CD8-positive, alpha-beta T cell (primary cell): ENCODE measurements at regions of chr19 and their contacts with region 1.

Region 1: GRCh38 chr19:46753420-46754155 is 7.3 kb upstream of the STRN4 start:
- DNase-seq: peak; percentile 51 to 82 (median 72)
- ATAC-seq: peak; percentile 95
- H3K4me3 ChIP-seq: no peak overlapping the region
- H3K4me3 Mint-ChIP-seq: no peak overlapping the region
- H3K27ac ChIP-seq: no peak overlapping the region
- H3K27ac Mint-ChIP-seq: no peak overlapping the region
- H3K4me1 ChIP-seq: no peaks in the 10 kb centered on the region
- H3K4me1 Mint-ChIP-seq: peaks cover 7% of the 10 kb centered on the region
- H3K27me3 ChIP-seq: no peaks in the 10 kb centered on the region
- H3K27me3 Mint-ChIP-seq: no peaks in the 10 kb centered on the region
- CTCF ChIP-seq: peak; percentile 55

Region 2: GRCh38 chr19:46529622-46530462 is 223.7 kb before region 1 on chr19:
- CTCF ChIA-PET with region 1: interaction called, 9 read pairs
- POLR2A ChIA-PET with region 1: no interaction called
- intact Hi-C with region 1: loop called (anchors 1 to 2 kb)
- DNase-seq: peak; percentile 57 to 88 (median 74)
- ATAC-seq: peak; percentile 75
- H3K4me3 ChIP-seq: no peak overlapping the region
- H3K4me3 Mint-ChIP-seq: no peak overlapping the region
- H3K27ac ChIP-seq: no peak overlapping the region
- H3K27ac Mint-ChIP-seq: no peak overlapping the region
- H3K4me1 ChIP-seq: peaks cover 4% of the 10 kb centered on the region
- H3K4me1 Mint-ChIP-seq: peaks cover 13% of the 10 kb centered on the region
- H3K27me3 ChIP-seq: peaks cover 0 to 2% of the 10 kb centered on the region in 2 experiments
- H3K27me3 Mint-ChIP-seq: no peaks in the 10 kb centered on the region
- CTCF ChIP-seq: peak; percentile 99

Region 3: GRCh38 chr19:46634045-46634655 is 119.4 kb before region 1 on chr19:
- CTCF ChIA-PET with region 1: no interaction called
- POLR2A ChIA-PET with region 1: no interaction called
- intact Hi-C with region 1: no loop called
- DNase-seq: peak; percentile 86 to 96 (median 92)
- ATAC-seq: peak; percentile 83
- H3K4me3 ChIP-seq: peak overlapping the region; percentile 40 to 59
- H3K4me3 Mint-ChIP-seq: peak overlapping the region; percentile 80
- H3K27ac ChIP-seq: peak overlapping the region; percentile 35 to 48
- H3K27ac Mint-ChIP-seq: peak overlapping the region; percentile 90
- H3K4me1 ChIP-seq: peaks cover 36% of the 10 kb centered on the region
- H3K4me1 Mint-ChIP-seq: peaks cover 24% of the 10 kb centered on the region
- H3K27me3 ChIP-seq: peaks cover 0 to 24% of the 10 kb centered on the region in 2 experiments
- H3K27me3 Mint-ChIP-seq: no peaks in the 10 kb centered on the region
- CTCF ChIP-seq: no peak

Region 4: GRCh38 chr19:46691104-46691503 is 62.5 kb before region 1 on chr19:
- CTCF ChIA-PET with region 1: no interaction called
- POLR2A ChIA-PET with region 1: no interaction called
- intact Hi-C with region 1: no loop called
- DNase-seq: no peak
- ATAC-seq: no peak
- H3K4me3 ChIP-seq: no peak overlapping the region
- H3K4me3 Mint-ChIP-seq: no peak overlapping the region
- H3K27ac ChIP-seq: no peak overlapping the region
- H3K27ac Mint-ChIP-seq: no peak overlapping the region
- H3K4me1 ChIP-seq: no peaks in the 10 kb centered on the region
- H3K4me1 Mint-ChIP-seq: peaks cover 7% of the 10 kb centered on the region
- H3K27me3 ChIP-seq: no peaks in the 10 kb centered on the region
- H3K27me3 Mint-ChIP-seq: no peaks in the 10 kb centered on the region
- CTCF ChIP-seq: no peak

Region 5: GRCh38 chr19:46766569-46767317 is 13.2 kb after region 1 on chr19:
- CTCF ChIA-PET with region 1: interaction called, 42 read pairs
- POLR2A ChIA-PET with region 1: interaction called, 3 read pairs
- intact Hi-C with region 1: no loop called
- DNase-seq: peak in 6 of 9 experiments; percentile 55 to 76 (median 68)
- ATAC-seq: peak; percentile 80
- H3K4me3 ChIP-seq: no peak overlapping the region
- H3K4me3 Mint-ChIP-seq: no peak overlapping the region
- H3K27ac ChIP-seq: no peak overlapping the region
- H3K27ac Mint-ChIP-seq: no peak overlapping the region
- H3K4me1 ChIP-seq: no peaks in the 10 kb centered on the region
- H3K4me1 Mint-ChIP-seq: peaks cover 2% of the 10 kb centered on the region
- H3K27me3 ChIP-seq: no peaks in the 10 kb centered on the region
- H3K27me3 Mint-ChIP-seq: no peaks in the 10 kb centered on the region
- CTCF ChIP-seq: peak; percentile 57

Region 6: DNA sequence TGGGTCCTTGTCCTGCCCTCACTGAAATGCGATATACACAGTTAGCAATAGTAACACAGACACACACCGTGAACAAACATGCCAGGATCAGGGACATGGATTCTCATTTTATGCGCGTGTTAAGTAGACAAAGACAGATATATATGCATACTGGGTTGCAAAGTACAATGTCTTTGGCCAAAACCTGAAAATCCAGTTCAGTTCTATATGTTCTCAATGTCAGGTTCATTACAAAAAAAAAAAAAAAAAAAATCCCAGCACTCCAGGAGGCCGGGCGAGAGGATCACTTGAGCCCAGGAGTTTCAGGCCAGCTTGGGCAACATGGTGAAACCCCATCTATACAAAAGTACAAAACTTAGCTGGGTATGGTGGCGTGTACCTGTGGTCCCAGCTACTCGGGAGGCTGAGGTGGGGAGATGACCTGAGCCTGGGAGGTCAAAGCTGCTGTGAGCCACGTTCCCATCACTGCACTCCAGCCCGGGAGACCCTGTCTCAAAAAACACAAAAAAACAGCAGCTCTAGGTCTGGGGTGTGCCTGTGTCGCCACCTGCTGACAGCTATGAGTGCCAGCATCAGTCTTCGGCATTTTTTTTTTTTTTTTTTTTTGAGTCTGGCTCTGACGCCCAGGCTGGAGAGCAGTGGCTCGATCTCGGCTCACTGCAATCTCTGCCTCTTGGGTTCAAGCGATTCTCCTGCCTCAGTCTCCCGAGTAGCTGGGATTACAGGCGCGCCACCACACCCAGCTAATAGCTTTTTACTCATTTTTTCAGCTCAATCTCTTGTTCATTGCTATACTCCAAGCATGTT is 86.8 kb after region 1 on chr19:
- CTCF ChIA-PET with region 1: interaction called, 287 read pairs
- POLR2A ChIA-PET with region 1: interaction called, 5 read pairs
- intact Hi-C with region 1: loop called (anchors 1 kb)
- DNase-seq: peak in 6 of 9 experiments; percentile 52 to 83 (median 62)
- ATAC-seq: peak; percentile 95
- H3K4me3 ChIP-seq: no peak overlapping the region
- H3K4me3 Mint-ChIP-seq: no peak overlapping the region
- H3K27ac ChIP-seq: no peak overlapping the region
- H3K27ac Mint-ChIP-seq: no peak overlapping the region
- H3K4me1 ChIP-seq: no peaks in the 10 kb centered on the region
- H3K4me1 Mint-ChIP-seq: no peaks in the 10 kb centered on the region
- H3K27me3 ChIP-seq: no peaks in the 10 kb centered on the region
- H3K27me3 Mint-ChIP-seq: no peaks in the 10 kb centered on the region
- CTCF ChIP-seq: peak; percentile 77

Region 7: GRCh38 chr19:46990991-46991676 is 237.5 kb after region 1 on chr19:
- CTCF ChIA-PET with region 1: interaction called, 10 read pairs
- POLR2A ChIA-PET with region 1: no interaction called
- intact Hi-C with region 1: loop called (anchors 2 to 10 kb)
- DNase-seq: peak in 8 of 9 experiments; percentile 37 to 80 (median 65)
- ATAC-seq: peak; percentile 73
- H3K4me3 ChIP-seq: no peak overlapping the region
- H3K4me3 Mint-ChIP-seq: no peak overlapping the region
- H3K27ac ChIP-seq: no peak overlapping the region
- H3K27ac Mint-ChIP-seq: no peak overlapping the region
- H3K4me1 ChIP-seq: peaks cover 10% of the 10 kb centered on the region
- H3K4me1 Mint-ChIP-seq: peaks cover 17% of the 10 kb centered on the region
- H3K27me3 ChIP-seq: no peaks in the 10 kb centered on the region
- H3K27me3 Mint-ChIP-seq: no peaks in the 10 kb centered on the region
- CTCF ChIP-seq: peak; percentile 63

Region 8: DNA sequence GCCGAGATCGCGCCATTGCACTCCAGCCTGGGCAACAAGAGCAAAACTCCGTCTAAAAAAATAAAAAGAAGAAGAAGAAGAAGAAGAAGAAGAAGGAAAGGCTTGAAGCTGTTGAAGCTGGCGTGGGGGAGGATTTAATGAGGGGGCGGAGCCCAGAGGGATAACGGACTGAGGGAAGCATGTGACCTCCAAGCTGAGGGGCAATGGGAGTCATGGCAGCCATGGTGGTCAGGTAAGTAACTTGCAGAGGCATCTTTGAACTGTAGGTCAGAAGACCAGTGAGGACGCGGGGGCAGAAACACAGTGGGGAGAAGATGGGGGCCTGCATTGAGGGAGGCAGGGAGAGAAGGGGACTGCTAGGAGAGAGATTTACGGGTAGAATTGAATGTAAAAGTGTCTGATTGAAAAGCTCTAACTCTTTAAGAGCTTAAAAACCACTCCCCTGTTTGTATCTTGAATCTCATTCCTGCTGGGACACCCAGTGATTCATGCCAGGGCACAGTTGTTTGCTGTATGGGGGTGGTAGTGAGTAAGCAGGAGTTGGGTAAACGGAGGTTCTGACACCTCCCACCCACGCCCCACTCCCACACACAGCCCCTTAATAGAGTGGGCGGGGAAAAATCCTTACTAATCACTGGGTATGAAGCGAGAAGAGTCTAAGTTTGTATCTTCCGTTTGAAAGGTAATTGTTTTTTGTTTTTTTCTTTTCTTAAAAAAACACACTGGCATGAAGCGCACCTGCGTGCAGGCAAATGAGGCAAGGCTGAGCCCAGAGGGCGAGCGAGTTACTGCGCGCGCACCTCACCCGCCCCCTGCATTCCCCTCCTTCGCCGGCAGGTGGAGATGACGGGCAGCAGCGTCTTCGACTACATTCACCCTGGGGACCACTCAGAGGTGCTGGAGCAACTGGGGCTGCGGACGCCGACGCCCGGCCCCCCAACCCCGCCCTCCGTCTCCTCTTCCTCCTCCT is 281.8 kb after region 1 on chr19:
- CTCF ChIA-PET with region 1: interaction called, 5 read pairs
- POLR2A ChIA-PET with region 1: no interaction called
- intact Hi-C with region 1: loop called in 1 of 2 experiments (anchors 1 kb)
- DNase-seq: peak; percentile 90 to 99 (median 96)
- ATAC-seq: peak; percentile 98
- H3K4me3 ChIP-seq: peak overlapping the region; percentile 52 to 58
- H3K4me3 Mint-ChIP-seq: peak overlapping the region; percentile 88
- H3K27ac ChIP-seq: peak overlapping the region in 1 of 2 experiments; percentile 30
- H3K27ac Mint-ChIP-seq: peak overlapping the region; percentile 85
- H3K4me1 ChIP-seq: peaks cover 16% of the 10 kb centered on the region
- H3K4me1 Mint-ChIP-seq: peaks cover 17% of the 10 kb centered on the region
- H3K27me3 ChIP-seq: peaks cover 4 to 6% of the 10 kb centered on the region in 2 experiments
- H3K27me3 Mint-ChIP-seq: peaks cover 8% of the 10 kb centered on the region
- CTCF ChIP-seq: peak; percentile 99